ENCODE measurements at regions of chr7 and their contacts with region 1.

Region 1: GRCh38 chr7:35694781-35695472 is at the start of gene HERPUD2:
- DNase-seq: peak; percentile 91 to 94 (median 93)
- H3K4me3 ChIP-seq: peak within 1 kb of the TSS; percentile 90 to 98
- H3K4me3 Mint-ChIP-seq: peak within 1 kb of the TSS; percentile 94 to 99 (median 98)
- H3K27ac ChIP-seq: peak within 1 kb of the TSS; percentile 93
- H3K27ac Mint-ChIP-seq: peak within 1 kb of the TSS; percentile 86 to 100 (median 98)
- H3K4me1 ChIP-seq: peaks cover 33% of the 10 kb centered on the region
- H3K4me1 Mint-ChIP-seq: peaks cover 23 to 67% (median 39%) of the 10 kb centered on the region in 4 donors
- H3K27me3 ChIP-seq: no peaks in the 10 kb centered on the region
- H3K27me3 Mint-ChIP-seq: no peaks in the 10 kb centered on the region
- total RNA-seq, gene HERPUD2: 67.3 to 71.8 TPM

Region 2: GRCh38 chr7:35647171-35647574 is 47.8 kb before region 1 on chr7:
- CTCF ChIA-PET with region 1: no interaction called
- POLR2A ChIA-PET with region 1: interaction called, 13 read pairs
- intact Hi-C with region 1: no loop called
- DNase-seq: no peak
- H3K4me3 ChIP-seq: no peak overlapping the region
- H3K4me3 Mint-ChIP-seq: peak overlapping the region in 7 of 8 donors; percentile 10 to 64 (median 38)
- H3K27ac ChIP-seq: no peak overlapping the region
- H3K27ac Mint-ChIP-seq: peak overlapping the region in 6 of 7 donors; percentile 8 to 84 (median 32)
- H3K4me1 ChIP-seq: peaks cover 70% of the 10 kb centered on the region
- H3K4me1 Mint-ChIP-seq: peaks cover 52 to 90% (median 76%) of the 10 kb centered on the region in 4 donors
- H3K27me3 ChIP-seq: no peaks in the 10 kb centered on the region
- H3K27me3 Mint-ChIP-seq: no peaks in the 10 kb centered on the region

Region 3: GRCh38 chr7:35658602-35659201 is 36.2 kb before region 1 on chr7:
- CTCF ChIA-PET with region 1: no interaction called
- POLR2A ChIA-PET with region 1: interaction called, 6 read pairs
- intact Hi-C with region 1: loop called (anchors 5 kb)
- DNase-seq: no peak
- H3K4me3 ChIP-seq: no peak overlapping the region
- H3K4me3 Mint-ChIP-seq: no peak overlapping the region
- H3K27ac ChIP-seq: no peak overlapping the region
- H3K27ac Mint-ChIP-seq: peak overlapping the region in 3 of 7 donors; percentile 3 to 65 (median 59)
- H3K4me1 ChIP-seq: peaks cover 33% of the 10 kb centered on the region
- H3K4me1 Mint-ChIP-seq: peaks cover 36 to 79% (median 57%) of the 10 kb centered on the region in 4 donors
- H3K27me3 ChIP-seq: no peaks in the 10 kb centered on the region
- H3K27me3 Mint-ChIP-seq: no peaks in the 10 kb centered on the region

Region 4: DNA sequence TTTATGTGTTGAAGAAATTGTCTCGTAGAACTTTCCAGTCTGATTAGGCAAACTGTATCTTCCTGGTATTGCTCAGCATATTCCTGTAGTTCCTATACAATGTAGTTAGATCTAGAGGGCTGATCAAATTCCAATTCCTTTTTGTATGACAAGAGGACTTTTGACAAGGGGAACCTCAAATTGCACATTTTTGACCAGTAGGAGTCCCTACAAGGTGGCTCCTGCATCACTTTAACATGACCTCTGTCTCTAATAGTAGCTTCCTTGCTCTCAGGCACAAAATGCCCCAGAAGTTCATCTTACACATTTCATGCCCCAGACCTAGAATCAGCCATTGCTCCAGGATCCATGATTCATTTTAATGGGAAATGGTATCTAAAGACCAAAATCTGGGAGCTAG is 18.7 kb before region 1 on chr7:
- CTCF ChIA-PET with region 1: interaction called, 4 read pairs
- POLR2A ChIA-PET with region 1: interaction called, 10 read pairs
- intact Hi-C with region 1: loop called (anchors 2 kb)
- DNase-seq: no peak
- H3K4me3 ChIP-seq: no peak overlapping the region
- H3K4me3 Mint-ChIP-seq: peak overlapping the region in 1 of 8 donors; percentile 47
- H3K27ac ChIP-seq: no peak overlapping the region
- H3K27ac Mint-ChIP-seq: peak overlapping the region in 3 of 7 donors; percentile 36 to 73 (median 46)
- H3K4me1 ChIP-seq: peaks cover 63% of the 10 kb centered on the region
- H3K4me1 Mint-ChIP-seq: peaks cover 50 to 84% (median 64%) of the 10 kb centered on the region in 4 donors
- H3K27me3 ChIP-seq: no peaks in the 10 kb centered on the region
- H3K27me3 Mint-ChIP-seq: no peaks in the 10 kb centered on the region

Region 5: GRCh38 chr7:35707422-35707821 is 12.5 kb after region 1 on chr7:
- CTCF ChIA-PET with region 1: interaction called, 25 read pairs
- POLR2A ChIA-PET with region 1: interaction called, 76 read pairs
- intact Hi-C with region 1: loop called (anchors 1 kb)
- DNase-seq: no peak
- H3K4me3 ChIP-seq: no peak overlapping the region
- H3K4me3 Mint-ChIP-seq: peak overlapping the region in 1 of 8 donors; percentile 20
- H3K27ac ChIP-seq: no peak overlapping the region
- H3K27ac Mint-ChIP-seq: peak overlapping the region in 2 of 7 donors; percentile 16 to 17
- H3K4me1 ChIP-seq: peaks cover 15% of the 10 kb centered on the region
- H3K4me1 Mint-ChIP-seq: peaks cover 9 to 24% (median 18%) of the 10 kb centered on the region in 4 donors
- H3K27me3 ChIP-seq: no peaks in the 10 kb centered on the region
- H3K27me3 Mint-ChIP-seq: no peaks in the 10 kb centered on the region

Region 6: DNA sequence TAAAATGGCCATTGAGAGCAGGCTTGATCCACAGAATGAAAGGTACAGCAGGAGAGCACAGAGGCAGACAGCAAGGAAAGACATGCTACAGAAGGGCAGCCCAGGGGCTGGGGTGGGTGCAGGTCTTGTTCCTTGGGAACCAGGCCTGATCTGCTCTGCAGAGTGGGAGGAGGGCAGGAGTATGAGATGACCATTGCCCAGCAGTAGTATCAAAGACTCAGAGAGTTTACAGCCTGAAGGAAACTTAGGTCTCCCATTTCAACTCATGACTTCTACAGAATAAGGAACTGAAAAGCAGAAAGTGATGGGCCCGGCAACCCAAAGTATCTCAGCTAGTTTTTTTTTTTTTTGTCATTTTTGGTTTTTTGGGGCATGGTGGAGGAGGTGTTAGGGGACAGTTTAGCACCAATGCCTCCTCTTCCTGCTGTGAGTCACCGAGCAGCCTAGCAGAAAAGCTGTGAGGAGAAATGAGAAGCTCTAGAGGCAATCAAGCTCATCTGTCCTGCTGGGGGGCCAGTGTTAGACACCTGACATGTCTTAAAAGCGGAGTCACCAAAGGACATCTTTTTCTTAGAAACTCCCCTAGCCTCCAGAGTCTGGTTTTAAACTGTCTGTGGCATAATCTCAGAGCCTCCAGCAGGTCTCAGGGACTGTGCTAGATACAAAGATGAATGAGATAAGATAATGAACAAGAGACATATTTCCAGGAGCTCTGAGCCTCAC is 34.3 kb after region 1 on chr7:
- CTCF ChIA-PET with region 1: interaction called, 22 read pairs
- POLR2A ChIA-PET with region 1: interaction called, 15 read pairs
- intact Hi-C with region 1: no loop called
- DNase-seq: peak in 4 of 5 donors; percentile 15 to 83 (median 32)
- H3K4me3 ChIP-seq: no peak overlapping the region
- H3K4me3 Mint-ChIP-seq: peak overlapping the region in 7 of 8 donors; percentile 3 to 64 (median 46)
- H3K27ac ChIP-seq: peak overlapping the region; percentile 8
- H3K27ac Mint-ChIP-seq: peak overlapping the region in 6 of 7 donors; percentile 9 to 85 (median 22)
- H3K4me1 ChIP-seq: peaks cover 52% of the 10 kb centered on the region
- H3K4me1 Mint-ChIP-seq: peaks cover 33 to 51% (median 44%) of the 10 kb centered on the region in 4 donors
- H3K27me3 ChIP-seq: no peaks in the 10 kb centered on the region
- H3K27me3 Mint-ChIP-seq: no peaks in the 10 kb centered on the region

Region 7: DNA sequence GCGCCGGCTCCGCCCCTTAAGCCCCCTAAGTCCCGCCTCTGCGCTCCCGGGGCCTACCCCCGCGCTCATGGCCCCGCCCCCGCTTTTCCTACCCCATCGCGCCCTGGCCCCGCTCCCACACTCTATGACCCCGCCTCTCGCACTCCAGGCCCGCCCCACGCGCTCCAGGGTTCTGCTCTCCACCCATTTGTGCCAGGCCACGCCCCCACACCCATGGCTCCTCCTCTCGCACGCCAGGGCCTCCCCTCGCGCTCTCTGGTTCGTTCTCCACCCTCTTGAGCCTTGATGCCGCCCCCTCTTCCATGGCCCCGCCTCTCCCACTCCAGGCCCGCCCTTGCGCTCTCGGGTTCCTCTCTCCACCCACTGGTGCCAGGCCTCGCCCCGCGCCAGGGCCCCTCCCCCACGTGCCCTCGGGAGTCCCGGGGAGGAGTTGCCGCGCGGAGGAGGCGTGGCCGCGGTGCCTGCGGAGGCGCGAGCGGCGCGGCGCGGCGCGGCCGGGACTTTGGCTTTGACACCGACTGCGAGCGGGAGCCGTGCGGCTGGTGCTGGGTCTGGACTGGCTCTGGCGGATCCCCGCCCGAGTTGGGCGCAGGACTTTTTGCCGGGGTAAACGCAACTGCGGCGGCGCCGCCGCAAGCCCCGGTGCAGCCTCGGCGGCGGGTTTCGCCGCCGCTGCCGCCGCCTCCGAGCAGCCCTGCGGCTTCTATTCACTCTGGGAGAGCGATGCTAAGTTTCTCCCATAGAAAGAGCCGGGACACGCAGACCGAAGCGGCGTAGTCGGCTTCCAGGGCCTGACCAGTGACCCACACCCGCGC is 458.0 kb after region 1 on chr7 and contains the start of gene EEPD1:
- CTCF ChIA-PET with region 1: no interaction called
- POLR2A ChIA-PET with region 1: no interaction called
- intact Hi-C with region 1: loop called (anchors 5 kb)
- DNase-seq: peak; percentile 99 to 100 (median 100)
- H3K4me3 ChIP-seq: peak within 1 kb of the TSS; percentile 63 to 72
- H3K4me3 Mint-ChIP-seq: peak within 1 kb of the TSS; percentile 81 to 87 (median 84)
- H3K27ac ChIP-seq: peak within 1 kb of the TSS; percentile 53
- H3K27ac Mint-ChIP-seq: peak within 1 kb of the TSS; percentile 46 to 82 (median 73)
- H3K4me1 ChIP-seq: peaks cover 44% of the 10 kb centered on the region
- H3K4me1 Mint-ChIP-seq: peaks cover 17 to 48% (median 42%) of the 10 kb centered on the region in 4 donors
- H3K27me3 ChIP-seq: no peaks in the 10 kb centered on the region
- H3K27me3 Mint-ChIP-seq: no peaks in the 10 kb centered on the region
- total RNA-seq, gene EEPD1: 6.3 to 8.0 TPM

Measured in CD4-positive, alpha-beta memory T cell (primary cell).